ENCODE measurements at regions of chr9 and their contacts with region 1.

Region 1: DNA sequence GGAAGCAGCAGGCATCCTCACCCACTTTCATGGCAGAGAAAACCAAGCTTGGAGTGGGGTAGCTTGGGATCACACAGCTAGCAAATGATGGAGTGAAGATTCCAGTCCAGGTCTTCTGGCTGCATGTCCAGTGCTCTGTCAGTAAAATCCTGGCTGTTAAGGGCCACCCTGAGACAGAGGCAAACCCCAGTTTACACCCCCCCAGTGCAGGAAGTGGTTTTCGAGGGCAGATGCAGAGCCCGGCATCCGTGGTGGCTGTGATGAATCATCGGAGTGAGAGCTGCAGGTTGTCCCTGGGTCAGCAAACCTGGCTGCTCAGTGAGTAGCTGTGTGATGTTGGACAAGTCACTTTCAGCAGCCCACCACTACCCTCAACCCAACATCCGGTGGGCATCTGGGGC is 115.4 kb downstream of the RGS3 start:
- DNase-seq: peak; percentile 87
- CTCF ChIP-seq: no peak

Region 2: GRCh38 chr9:113454914-113455761 is 123.7 kb before region 1 on chr9:
- CTCF ChIA-PET with region 1: interaction called, 15 read pairs
- POLR2A ChIA-PET with region 1: no interaction called
- DNase-seq: no peak
- CTCF ChIP-seq: no peak

Region 3: GRCh38 chr9:113523421-113524236 is 55.3 kb before region 1 on chr9:
- CTCF ChIA-PET with region 1: interaction called, 11 read pairs
- POLR2A ChIA-PET with region 1: interaction called, 3 read pairs
- DNase-seq: peak; percentile 80
- CTCF ChIP-seq: no peak

Region 4: DNA sequence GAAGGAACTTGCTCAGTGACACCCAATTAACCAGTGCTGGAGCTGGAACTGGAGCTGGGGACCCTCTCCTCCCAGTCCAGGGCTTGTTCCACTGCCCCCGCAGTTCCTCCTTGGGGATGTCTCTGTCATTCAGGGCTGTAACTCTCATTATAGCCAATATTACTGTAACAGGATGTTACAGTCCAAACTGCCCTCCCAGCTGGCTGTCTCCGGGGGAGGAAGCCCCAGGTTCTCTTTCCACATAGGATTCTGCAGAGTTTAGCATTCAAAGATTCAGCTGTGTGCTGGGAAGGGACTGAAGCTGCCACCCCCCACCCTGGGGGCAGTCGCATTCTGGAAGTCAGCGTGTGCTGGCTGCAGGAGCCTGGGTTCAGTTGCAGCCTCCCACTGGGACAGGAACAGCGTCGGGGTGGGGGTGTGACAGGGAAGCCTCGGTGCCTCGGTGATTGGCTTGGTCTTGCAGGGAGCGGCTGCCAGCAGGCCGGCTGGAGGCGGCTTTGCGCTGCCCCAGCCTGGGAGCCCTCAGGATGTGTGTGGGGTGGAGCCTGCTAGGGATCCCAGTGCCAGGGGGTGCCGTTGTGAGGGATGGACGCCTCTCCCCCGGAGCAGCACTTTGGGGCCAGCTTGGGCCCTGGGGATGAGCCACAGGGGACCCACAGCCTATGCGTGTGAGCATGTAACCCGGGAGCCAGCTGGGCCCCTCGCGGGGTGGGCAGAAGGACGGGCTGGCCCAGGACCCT is 14.2 kb before region 1 on chr9:
- CTCF ChIA-PET with region 1: interaction called, 15 read pairs
- POLR2A ChIA-PET with region 1: no interaction called
- DNase-seq: no peak
- CTCF ChIP-seq: no peak

Measured in GM10248 (cell line).